ENCODE measurements at regions of chr14 and their contacts with region 1.

Region 1: DNA sequence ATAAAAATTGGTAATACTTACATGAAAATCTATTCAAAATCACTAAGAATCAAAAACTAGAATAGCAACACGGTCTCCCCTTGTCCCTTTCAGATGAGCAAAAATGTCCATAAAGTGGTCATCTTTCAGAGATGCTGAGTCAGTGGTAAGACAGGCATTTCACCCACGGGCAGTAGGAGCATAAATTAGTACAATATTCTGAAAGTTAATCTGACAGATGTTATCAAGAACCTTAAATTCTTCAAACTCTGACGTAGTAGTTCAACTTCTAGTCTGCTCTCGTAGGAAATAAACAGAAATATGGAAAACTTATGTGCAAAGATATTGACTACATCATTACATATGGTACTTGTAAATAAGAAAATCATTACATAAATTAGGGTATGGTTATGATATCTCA is 33.1 kb upstream of the GNPNAT1 start:
- DNase-seq: no peak
- H3K4me3 ChIP-seq: no peak overlapping the region
- H3K27ac ChIP-seq: no peak overlapping the region
- H3K4me1 ChIP-seq: no peaks in the 10 kb centered on the region
- H3K27me3 ChIP-seq: no peaks in the 10 kb centered on the region
- CTCF ChIP-seq: no peak

Region 2: GRCh38 chr14:53055003-53055402 is 230.5 kb after region 1 on chr14:
- CTCF ChIA-PET with region 1: no interaction called
- dilution Hi-C with region 1: no loop called
- in situ Hi-C with region 1: no loop called
- intact Hi-C with region 1: loop called (anchors 1 kb)
- DNase-seq: peak; percentile 40
- H3K4me3 ChIP-seq: no peak overlapping the region
- H3K27ac ChIP-seq: no peak overlapping the region
- H3K4me1 ChIP-seq: no peaks in the 10 kb centered on the region
- H3K27me3 ChIP-seq: no peaks in the 10 kb centered on the region
- CTCF ChIP-seq: peak; percentile 72 to 82

Region 3: DNA sequence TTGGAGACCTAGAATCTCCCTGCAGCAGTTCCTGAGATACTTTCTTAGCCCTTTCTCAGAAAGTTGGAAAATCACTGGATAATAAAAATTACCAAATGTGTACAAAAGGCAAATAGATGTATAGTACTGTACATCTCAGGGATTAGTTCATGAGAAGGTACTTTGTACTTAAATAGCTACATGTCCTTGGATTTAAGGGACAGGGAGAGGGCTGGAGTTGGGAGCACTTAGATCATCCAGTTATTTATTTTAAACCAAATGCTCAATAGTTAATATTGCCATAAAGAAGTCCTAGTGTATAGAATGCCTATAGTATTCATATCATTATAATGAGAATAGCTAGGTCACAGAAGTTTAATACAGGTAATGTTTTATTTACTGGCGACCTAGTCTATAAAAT is 1585.7 kb after region 1 on chr14:
- CTCF ChIA-PET with region 1: no interaction called
- dilution Hi-C with region 1: no loop called
- in situ Hi-C with region 1: no loop called
- intact Hi-C with region 1: no loop called
- DNase-seq: no peak
- H3K4me3 ChIP-seq: no peak overlapping the region
- H3K27ac ChIP-seq: no peak overlapping the region
- H3K4me1 ChIP-seq: no peaks in the 10 kb centered on the region
- H3K27me3 ChIP-seq: no peaks in the 10 kb centered on the region
- CTCF ChIP-seq: no peak

Measured in mammary epithelial cell (primary cell).